AG04449 (cell line): ENCODE measurements at regions of chr15 and their contacts with region 1.

Region 1: GRCh38 chr15:84955089-84955848 is 26.4 kb upstream of the PDE8A start:
- DNase-seq: no peak
- H3K4me3 ChIP-seq: peak overlapping the region; percentile 42
- CTCF ChIP-seq: peak; percentile 88

Region 2: GRCh38 chr15:85005319-85005718 is 50.0 kb after region 1 on chr15:
- CTCF ChIA-PET with region 1: interaction called, 10 read pairs
- POLR2A ChIA-PET with region 1: no interaction called
- DNase-seq: no peak
- H3K4me3 ChIP-seq: no peak overlapping the region
- CTCF ChIP-seq: no peak

Region 3: GRCh38 chr15:85036716-85037115 is 81.4 kb after region 1 on chr15:
- CTCF ChIA-PET with region 1: interaction called, 25 read pairs
- POLR2A ChIA-PET with region 1: no interaction called
- DNase-seq: no peak
- H3K4me3 ChIP-seq: no peak overlapping the region
- CTCF ChIP-seq: no peak